Sciatic nerve (tissue), 2 donors: ENCODE measurements at regions of chr1 and their contacts with region 1.

Region 1: GRCh38 chr1:89483010-89483756 is 41.4 kb upstream of the LRRC8B start:
- DNase-seq: peak; percentile 90
- ATAC-seq: peak; percentile 88

Region 2: GRCh38 chr1:89405275-89405929 is 77.8 kb before region 1 on chr1:
- intact Hi-C with region 1: no loop called
- DNase-seq: no peak
- ATAC-seq: no peak

Region 3: DNA sequence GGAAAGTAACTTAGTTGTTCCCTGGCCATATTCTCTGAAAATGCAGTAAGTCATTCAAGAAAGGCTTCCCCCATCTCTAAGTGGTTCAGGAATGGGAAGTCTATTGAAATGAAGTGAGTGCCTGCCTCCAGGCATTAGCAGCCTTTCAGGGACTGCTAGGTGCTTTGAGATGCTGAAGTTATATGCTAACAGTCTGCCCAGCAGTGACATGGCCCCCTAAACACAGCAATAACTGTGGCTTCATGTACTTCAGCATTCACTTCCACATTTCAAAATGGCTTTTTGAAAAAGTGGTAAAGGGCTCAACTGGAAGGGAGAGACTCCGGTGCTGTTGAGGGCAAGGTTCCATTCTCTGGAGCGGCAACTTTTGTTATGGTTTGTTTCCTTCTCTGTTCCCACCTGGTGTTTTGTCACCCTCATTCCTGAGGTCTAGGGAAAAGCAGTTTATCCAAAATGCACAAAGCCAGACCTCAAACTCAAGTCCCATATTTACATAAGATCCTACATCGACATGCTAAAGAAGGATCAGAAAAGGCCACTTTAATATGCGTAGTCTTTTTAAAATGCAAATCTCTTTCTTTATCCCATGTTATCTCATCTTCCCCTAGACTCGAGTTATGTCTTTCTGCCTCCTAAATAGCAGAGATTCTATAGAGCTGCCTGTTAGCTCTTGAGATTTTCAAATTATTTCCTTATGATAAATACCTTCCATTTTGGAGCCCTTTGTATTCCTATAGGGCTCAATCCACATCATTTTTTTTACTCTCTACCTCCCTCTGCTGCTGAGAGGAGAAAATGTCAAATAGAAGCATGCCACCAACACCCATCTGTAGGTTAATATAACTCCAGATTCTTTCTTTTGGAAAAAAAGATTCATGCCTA is 115.5 kb after region 1 on chr1:
- intact Hi-C with region 1: loop called (anchors 2 kb)
- DNase-seq: no peak
- ATAC-seq: peak; percentile 77

Region 4: GRCh38 chr1:89632657-89633247 is 149.6 kb after region 1 on chr1 and contains the start of gene LRRC8C:
- intact Hi-C with region 1: loop called (anchors 10 kb)
- DNase-seq: peak; percentile 89
- ATAC-seq: peak; percentile 91
- total RNA-seq, gene LRRC8C: 19.6 TPM

Region 5: GRCh38 chr1:89762779-89763648 is 279.8 kb after region 1 on chr1:
- intact Hi-C with region 1: loop called (anchors 10 kb)
- DNase-seq: peak; percentile 91
- ATAC-seq: peak; percentile 98